ENCODE measurements at regions of chr1 and their contacts with region 1.

Region 1: GRCh38 chr1:113835642-113836307 is 23.5 kb upstream of the RSBN1 start:
- DNase-seq: no peak
- H3K4me3 ChIP-seq: no peak overlapping the region
- H3K27ac ChIP-seq: no peak overlapping the region
- H3K4me1 ChIP-seq: peaks cover 0 to 8% (median 0%) of the 10 kb centered on the region in 4 donors
- H3K27me3 ChIP-seq: no peaks in the 10 kb centered on the region
- CTCF ChIP-seq: peak; percentile 62 to 77 (median 67)
- EP300 ChIP-seq: no peak
- POLR2A ChIP-seq: no peak

Region 2: DNA sequence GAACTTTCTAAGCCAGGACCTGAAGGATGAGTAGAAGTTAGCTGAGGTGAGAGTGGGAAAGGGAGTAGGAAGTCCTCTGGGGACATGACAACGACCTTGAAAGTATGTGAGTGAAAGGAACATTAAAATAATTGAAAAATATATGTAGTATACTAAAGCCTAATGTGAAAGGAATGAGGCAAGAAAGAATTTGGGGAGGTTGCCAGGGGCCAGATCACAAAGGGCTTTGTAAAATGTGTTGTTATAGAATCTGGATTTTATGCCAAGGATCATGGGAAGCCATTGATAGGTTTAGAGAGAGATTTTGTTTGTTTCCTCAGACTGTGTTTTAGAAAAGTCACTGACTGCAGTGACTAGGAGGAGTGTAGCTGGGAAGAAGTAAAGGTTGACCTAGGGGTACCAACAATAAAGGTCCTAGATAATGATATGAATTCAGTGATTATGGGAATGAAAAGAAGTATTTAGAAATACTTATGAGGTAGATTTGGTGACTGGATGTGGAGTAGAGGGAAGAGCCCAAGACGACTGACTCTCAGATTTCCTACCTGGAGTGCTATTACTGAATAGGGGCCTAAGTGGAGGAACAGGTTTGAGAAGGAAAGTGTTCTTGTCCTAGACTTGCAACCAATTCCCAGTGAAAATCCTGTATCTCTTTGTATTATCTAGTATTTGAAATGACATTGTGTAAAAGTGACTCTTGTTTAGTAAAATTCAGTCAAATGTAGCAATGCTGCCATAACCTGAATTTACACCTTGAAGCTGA is 256.3 kb before region 1 on chr1:
- in situ Hi-C with region 1: no loop called
- intact Hi-C with region 1: no loop called
- DNase-seq: no peak
- H3K4me3 ChIP-seq: no peak overlapping the region
- H3K27ac ChIP-seq: no peak overlapping the region
- H3K4me1 ChIP-seq: no peaks in the 10 kb centered on the region
- H3K27me3 ChIP-seq: no peaks in the 10 kb centered on the region
- CTCF ChIP-seq: no peak
- EP300 ChIP-seq: no peak
- POLR2A ChIP-seq: no peak

Region 3: DNA sequence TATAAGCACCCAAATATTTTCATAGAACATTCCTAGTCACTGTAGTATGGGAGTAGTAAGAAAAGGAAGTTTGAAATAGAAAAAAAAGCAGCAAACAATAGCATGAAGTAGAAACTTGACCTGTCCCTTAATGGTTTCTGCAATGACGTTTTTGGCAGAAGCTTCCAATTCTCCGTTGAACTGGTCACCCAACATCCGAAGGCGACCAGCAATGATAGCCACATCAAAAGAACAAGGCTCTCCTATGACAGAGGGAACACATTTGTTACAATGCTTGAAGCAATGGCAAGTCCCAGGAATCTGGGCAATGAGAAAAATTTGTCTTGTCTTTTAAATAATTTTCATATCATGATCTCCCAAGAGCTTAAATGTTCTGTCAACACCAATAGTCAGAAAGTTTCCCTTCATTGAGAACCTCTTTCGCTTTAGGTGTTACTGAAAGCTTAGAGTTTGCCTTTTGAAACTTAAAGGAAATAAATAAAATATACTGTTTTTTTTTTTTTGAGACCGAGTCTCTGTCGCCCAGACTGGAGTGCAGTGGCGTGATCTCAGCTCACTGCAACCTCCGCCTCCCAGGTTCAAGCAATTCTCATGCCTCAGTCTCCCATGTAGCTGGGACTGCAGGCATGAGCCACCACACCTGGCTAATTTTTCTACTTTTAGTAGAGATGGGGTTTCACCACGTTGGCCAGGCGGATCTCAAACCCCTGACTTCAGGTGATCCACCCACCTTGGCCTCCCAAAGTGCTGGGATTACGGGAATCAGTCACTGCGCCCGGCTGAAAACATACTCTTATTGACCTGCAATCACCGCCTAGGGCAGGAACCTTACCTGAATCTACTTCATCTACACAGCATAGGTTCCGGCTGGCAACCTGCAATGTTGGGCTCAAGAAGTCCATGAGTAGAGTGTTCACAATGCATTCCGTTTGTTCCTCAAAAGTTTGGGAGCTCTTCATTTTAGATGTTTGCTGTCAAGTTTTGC is 50.9 kb after region 1 on chr1:
- in situ Hi-C with region 1: no loop called
- intact Hi-C with region 1: no loop called
- DNase-seq: peak; percentile 25
- H3K4me3 ChIP-seq: peak overlapping the region in 3 of 4 donors; percentile 31 to 47 (median 32)
- H3K27ac ChIP-seq: peak overlapping the region; percentile 77 to 86 (median 78)
- H3K4me1 ChIP-seq: peaks cover 0 to 33% (median 11%) of the 10 kb centered on the region in 4 donors
- H3K27me3 ChIP-seq: no peaks in the 10 kb centered on the region
- CTCF ChIP-seq: no peak
- EP300 ChIP-seq: no peak
- POLR2A ChIP-seq: no peak

Region 4: DNA sequence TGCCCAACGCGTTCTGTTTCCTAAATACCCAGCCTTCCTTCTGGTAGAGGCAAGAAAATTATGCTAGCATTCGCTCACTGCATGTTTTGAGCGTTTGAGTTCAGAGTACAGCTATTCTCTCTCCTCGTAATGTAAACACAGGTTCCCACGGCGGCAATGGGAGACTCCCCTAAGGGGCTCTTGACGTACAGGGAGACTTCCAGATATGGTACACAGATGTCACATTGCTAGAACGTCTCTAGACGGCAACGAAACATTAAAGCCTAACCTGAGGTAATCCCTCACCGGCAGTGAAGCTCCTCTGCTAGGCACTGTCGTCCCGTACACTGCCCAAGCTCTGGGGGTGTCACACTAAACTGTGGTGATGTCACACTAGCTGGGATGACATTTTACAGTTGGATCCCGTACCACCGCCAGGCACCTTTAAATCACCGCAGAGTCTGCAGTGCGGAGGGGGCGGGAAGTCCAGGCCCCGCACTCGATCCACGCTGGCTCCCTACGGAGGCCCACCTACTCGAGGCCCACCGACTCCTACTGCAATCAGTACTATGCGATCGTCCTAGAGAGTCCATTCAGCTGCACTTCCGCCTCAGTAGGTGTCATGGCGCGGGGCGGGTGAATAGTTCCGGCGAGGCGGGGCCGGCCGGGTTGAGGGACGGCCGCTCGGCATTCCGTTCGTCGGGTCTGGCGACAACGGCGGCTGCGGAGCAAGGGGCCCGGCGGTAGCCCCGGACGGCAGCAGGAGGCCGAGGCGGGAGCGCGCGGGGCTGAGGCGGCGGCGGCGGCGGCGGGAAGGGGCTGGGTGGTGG is 93.4 kb after region 1 on chr1 and contains the start of gene HIPK1:
- in situ Hi-C with region 1: loop called in 1 of 4 experiments (anchors 25 kb)
- intact Hi-C with region 1: no loop called
- DNase-seq: peak; percentile 95
- H3K4me3 ChIP-seq: peak within 1 kb of the TSS; percentile 86 to 99 (median 89)
- H3K27ac ChIP-seq: peak within 1 kb of the TSS; percentile 95 to 99 (median 98)
- H3K4me1 ChIP-seq: peaks cover 26 to 49% (median 40%) of the 10 kb centered on the region in 4 donors
- H3K27me3 ChIP-seq: no peaks in the 10 kb centered on the region
- CTCF ChIP-seq: peak in 2 of 5 experiments; percentile 36 to 45
- EP300 ChIP-seq: no peak
- POLR2A ChIP-seq: peak; percentile 75
- total RNA-seq, gene HIPK1: 48.3 to 63.9 (median 53.1) TPM

Region 5: GRCh38 chr1:114282751-114283403 is 447.1 kb after region 1 on chr1:
- in situ Hi-C with region 1: loop called in 3 of 4 experiments (anchors 25 kb)
- intact Hi-C with region 1: no loop called
- DNase-seq: peak; percentile 90
- H3K4me3 ChIP-seq: no peak overlapping the region
- H3K27ac ChIP-seq: no peak overlapping the region
- H3K4me1 ChIP-seq: no peaks in the 10 kb centered on the region
- H3K27me3 ChIP-seq: no peaks in the 10 kb centered on the region
- CTCF ChIP-seq: peak; percentile 83 to 89 (median 86)
- EP300 ChIP-seq: no peak
- POLR2A ChIP-seq: no peak